AG04450 (cell line): ENCODE measurements at regions of chr6 and their contacts with region 1.

Region 1: GRCh38 chr6:116253505-116254296 is at the start of gene TSPYL4:
- DNase-seq: peak; percentile 91
- H3K4me3 ChIP-seq: peak within 1 kb of the TSS; percentile 97
- H3K27ac ChIP-seq: peak within 1 kb of the TSS; percentile 86
- H3K27me3 ChIP-seq: no peaks in the 10 kb centered on the region
- CTCF ChIP-seq: no peak
- polyA plus RNA-seq, gene TSPYL4: 22.0 and 25.1 TPM in 2 replicates

Region 2: DNA sequence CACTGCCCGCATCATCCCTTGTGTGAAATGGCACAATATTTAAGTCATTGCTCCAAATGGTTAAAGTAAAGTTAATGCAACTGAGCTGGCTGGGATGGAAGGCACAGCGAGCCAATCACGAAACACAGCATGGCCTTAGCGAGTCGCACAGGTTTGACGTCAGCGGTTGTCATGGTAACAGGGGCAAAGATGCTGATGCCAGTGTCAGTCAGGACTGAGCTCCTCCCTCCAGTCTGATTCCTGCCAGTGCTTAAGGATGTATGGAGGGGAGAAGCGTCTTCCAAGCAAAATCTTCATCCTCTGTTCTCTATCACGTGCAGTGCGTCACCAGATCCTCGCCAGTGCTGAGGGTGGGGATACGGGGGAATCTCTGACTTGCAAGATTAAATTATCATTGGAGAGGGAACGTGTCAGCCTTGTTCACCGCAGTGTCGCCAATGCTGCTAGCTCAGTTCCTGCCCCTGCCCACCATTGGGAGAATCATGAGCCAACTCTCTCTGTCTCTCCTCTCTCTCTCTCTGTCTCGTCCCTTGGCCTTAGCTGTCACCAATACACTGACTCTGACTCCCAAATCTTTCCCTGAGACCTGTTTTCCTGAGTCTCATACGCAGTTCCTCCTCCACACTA is 24.3 kb before region 1 on chr6:
- CTCF ChIA-PET with region 1: interaction called, 3 read pairs
- POLR2A ChIA-PET with region 1: interaction called, 15 read pairs
- DNase-seq: peak; percentile 81
- H3K4me3 ChIP-seq: peak overlapping the region; percentile 48
- H3K27ac ChIP-seq: no peak overlapping the region
- H3K27me3 ChIP-seq: no peaks in the 10 kb centered on the region
- CTCF ChIP-seq: no peak

Region 3: GRCh38 chr6:116314878-116315277 is 61.2 kb after region 1 on chr6:
- CTCF ChIA-PET with region 1: no interaction called
- POLR2A ChIA-PET with region 1: no interaction called
- DNase-seq: no peak
- H3K4me3 ChIP-seq: no peak overlapping the region
- H3K27ac ChIP-seq: no peak overlapping the region
- H3K27me3 ChIP-seq: no peaks in the 10 kb centered on the region
- CTCF ChIP-seq: no peak

Region 4: GRCh38 chr6:116398316-116399010 is 144.8 kb after region 1 on chr6:
- CTCF ChIA-PET with region 1: no interaction called
- POLR2A ChIA-PET with region 1: no interaction called
- DNase-seq: no peak
- H3K4me3 ChIP-seq: peak overlapping the region; percentile 5
- H3K27ac ChIP-seq: peak overlapping the region; percentile 75
- H3K27me3 ChIP-seq: no peaks in the 10 kb centered on the region
- CTCF ChIP-seq: no peak

Region 5: GRCh38 chr6:116596815-116597214 is 343.1 kb after region 1 on chr6:
- CTCF ChIA-PET with region 1: no interaction called
- POLR2A ChIA-PET with region 1: no interaction called
- DNase-seq: no peak
- H3K4me3 ChIP-seq: no peak overlapping the region
- H3K27ac ChIP-seq: no peak overlapping the region
- H3K27me3 ChIP-seq: no peaks in the 10 kb centered on the region
- CTCF ChIP-seq: no peak